ENCODE measurements at regions of chr6 and their contacts with region 1.

Region 1: DNA sequence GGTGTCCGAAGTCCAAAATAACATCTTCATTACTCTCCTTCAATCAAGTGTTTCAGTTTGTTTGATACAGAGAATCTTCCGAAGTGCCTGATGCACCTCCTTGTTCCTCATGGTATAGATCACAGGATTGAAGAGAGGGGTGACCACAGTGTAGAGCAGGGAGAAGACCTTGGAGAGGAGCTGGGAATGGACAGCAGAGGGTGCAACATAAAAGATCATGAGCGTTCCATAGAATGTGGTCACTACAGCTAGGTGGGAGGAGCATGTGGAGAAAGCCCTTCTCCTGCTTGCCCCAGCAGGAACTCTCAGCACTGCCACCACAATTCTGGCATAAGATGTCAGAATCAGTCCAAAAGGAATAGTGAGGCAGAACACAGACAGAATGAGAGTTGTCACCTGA is 11.9 kb downstream of the OR12D1 start:
- DNase-seq: no peak
- H3K4me3 ChIP-seq: no peak overlapping the region
- CTCF ChIP-seq: no peak
- POLR2A ChIP-seq: no peak

Region 2: DNA sequence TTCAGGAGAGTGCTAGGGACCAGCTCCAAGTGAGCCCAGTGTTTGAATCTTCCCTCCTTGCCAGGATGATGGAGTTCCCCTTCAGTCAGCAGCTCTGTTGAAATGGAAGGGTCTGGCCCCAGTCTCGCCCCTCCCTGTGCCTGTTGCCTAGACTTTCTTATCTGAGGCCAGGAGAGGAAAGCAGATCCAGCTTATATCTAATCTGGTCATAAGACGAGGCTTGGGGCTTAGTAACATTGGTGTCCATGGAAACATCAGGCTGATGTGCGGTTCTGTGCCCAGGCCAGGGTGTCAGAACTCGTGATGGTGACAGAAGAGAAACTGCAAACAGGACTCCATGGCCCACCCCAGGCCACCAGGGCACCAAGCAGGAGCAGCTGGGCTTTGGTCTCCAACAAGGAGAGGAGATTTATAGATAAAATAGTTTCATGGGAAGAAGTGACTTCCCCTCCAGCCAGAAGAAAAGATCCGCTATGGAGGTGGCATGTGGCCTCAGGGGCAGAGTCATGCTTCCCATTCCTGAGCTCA is 51.3 kb after region 1 on chr6:
- intact Hi-C with region 1: loop called (anchors 1 kb)
- DNase-seq: no peak
- H3K4me3 ChIP-seq: no peak overlapping the region
- CTCF ChIP-seq: no peak
- POLR2A ChIP-seq: no peak

Measured in lower leg skin (tissue), 4 donors.